Activated CD4-positive, alpha-beta memory T cell treated with anti-CD3 and anti-CD28 coated beads for 36 hours (primary cell): ENCODE measurements at regions of chr2 and their contacts with region 1.

Region 1: GRCh38 chr2:206531996-206532543 is 88.7 kb downstream of the ADAM23 start:
- DNase-seq: no peak
- H3K4me3 Mint-ChIP-seq: no peak overlapping the region
- H3K27ac Mint-ChIP-seq: no peak overlapping the region
- H3K4me1 Mint-ChIP-seq: peaks cover 20% of the 10 kb centered on the region
- H3K27me3 Mint-ChIP-seq: peaks cover 6% of the 10 kb centered on the region

Region 2: DNA sequence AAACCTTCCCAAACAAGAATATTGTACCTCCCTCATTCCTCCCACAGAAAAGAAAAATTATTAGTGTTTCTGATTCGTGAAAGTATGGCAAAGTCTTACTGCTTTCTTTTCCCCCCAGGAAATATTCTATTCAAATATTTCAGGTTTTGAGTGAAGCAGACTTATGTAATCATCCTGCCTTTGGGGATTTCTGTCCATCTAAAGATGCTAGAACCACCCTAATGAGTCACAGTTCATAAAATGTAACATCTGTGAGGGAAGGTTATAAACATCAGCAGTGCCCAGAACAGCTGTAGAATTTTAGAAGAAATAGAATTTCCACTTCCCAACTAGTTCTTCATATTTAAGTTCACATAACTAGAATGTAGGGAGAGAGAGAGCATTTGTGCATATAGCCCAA is 333.4 kb before region 1 on chr2:
- CTCF ChIA-PET with region 1: no interaction called
- POLR2A ChIA-PET with region 1: no interaction called
- intact Hi-C with region 1: no loop called
- DNase-seq: no peak
- H3K4me3 Mint-ChIP-seq: no peak overlapping the region
- H3K27ac Mint-ChIP-seq: no peak overlapping the region
- H3K4me1 Mint-ChIP-seq: no peaks in the 10 kb centered on the region
- H3K27me3 Mint-ChIP-seq: peaks cover 19% of the 10 kb centered on the region

Region 3: GRCh38 chr2:206442833-206443734 is 89.0 kb before region 1 on chr2 and contains the start of gene ADAM23:
- CTCF ChIA-PET with region 1: no interaction called
- POLR2A ChIA-PET with region 1: no interaction called
- intact Hi-C with region 1: loop called (anchors 10 kb)
- DNase-seq: peak; percentile 71
- H3K4me3 Mint-ChIP-seq: peak within 1 kb of the TSS; percentile 79
- H3K27ac Mint-ChIP-seq: no peak within 1 kb of the TSS
- H3K4me1 Mint-ChIP-seq: peaks cover 18% of the 10 kb centered on the region
- H3K27me3 Mint-ChIP-seq: peaks cover 57% of the 10 kb centered on the region
- total RNA-seq, gene ADAM23: 1.8 to 2.3 TPM

Region 4: DNA sequence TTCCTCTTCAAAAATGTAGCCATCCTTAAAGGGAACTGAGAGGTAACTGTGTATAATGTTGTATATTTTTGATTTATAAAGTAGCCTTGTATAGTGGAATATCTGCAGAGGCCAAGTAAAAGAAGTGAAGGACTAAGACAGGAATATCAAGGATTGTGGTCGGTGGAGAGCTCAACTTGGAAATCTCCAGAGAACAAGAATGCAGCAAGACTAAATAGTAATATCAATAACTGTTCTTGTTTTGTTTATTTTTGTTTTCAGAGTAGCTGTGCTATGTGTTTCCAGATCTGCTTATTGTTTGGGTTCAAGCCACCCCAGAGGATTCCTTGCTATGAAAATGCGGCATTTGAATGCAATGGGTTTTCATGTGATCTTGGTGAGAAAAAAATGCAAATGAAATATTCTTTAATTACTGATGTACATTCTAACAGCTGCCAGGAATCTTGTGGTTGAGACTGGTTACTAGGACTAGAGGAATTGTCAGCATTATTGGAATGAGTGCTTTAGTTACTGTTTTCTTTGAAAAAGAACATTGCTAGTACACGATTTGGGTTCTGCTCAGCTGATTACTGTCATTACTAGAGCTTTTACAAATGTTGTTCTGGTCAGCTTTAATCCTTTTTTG is 258.4 kb after region 1 on chr2:
- CTCF ChIA-PET with region 1: no interaction called
- POLR2A ChIA-PET with region 1: no interaction called
- intact Hi-C with region 1: no loop called
- DNase-seq: no peak
- H3K4me3 Mint-ChIP-seq: no peak overlapping the region
- H3K27ac Mint-ChIP-seq: no peak overlapping the region
- H3K4me1 Mint-ChIP-seq: no peaks in the 10 kb centered on the region
- H3K27me3 Mint-ChIP-seq: no peaks in the 10 kb centered on the region